ENCODE measurements at regions of chr13 and their contacts with region 1.

Region 1: DNA sequence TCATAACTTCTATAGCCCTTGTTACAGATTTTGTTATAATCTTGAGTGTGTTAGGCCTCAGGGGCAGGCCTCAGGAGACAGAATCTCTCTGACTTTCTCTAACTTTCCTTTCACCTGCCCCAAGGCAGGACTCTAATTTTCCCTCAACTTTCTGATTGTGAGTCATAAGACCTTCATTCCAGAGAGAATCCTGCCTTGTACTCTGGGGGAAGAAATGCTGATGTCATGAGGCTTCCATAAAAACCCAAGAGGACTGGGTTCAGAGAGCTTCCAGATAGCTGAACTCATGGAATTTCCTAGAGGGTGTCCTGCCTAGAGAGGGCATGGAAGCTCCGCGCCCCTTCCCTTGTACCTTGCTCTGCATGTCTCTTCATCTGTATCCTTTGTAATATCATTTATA is 5.3 kb upstream of the KBTBD6 start:
- DNase-seq: no peak
- ATAC-seq: no peak
- H3K4me3 ChIP-seq: no peak overlapping the region
- H3K27ac ChIP-seq: no peak overlapping the region
- H3K4me1 ChIP-seq: peaks cover 8% of the 10 kb centered on the region
- H3K27me3 ChIP-seq: no peaks in the 10 kb centered on the region
- CTCF ChIP-seq: no peak
- POLR2A ChIP-seq: no peak

Region 2: DNA sequence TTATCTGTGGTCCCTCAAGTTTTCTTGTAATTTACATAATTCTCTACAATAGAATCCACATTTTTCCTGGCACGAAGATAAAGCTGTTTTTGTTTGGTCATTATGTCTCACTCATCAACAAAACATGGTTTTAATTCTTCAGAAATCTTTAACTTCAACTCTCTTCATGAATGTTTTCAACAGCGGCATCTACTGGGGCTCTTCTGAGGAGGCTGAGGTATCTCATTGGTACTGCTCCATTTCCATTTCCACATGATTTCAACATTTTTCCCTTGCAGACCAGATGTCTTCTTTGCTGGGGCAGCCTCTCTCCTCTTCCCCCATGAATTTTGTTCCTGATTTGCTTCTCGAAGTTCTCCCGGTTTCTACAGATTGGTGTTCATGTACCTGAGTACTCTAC is 62.2 kb after region 1 on chr13:
- intact Hi-C with region 1: loop called (anchors 5 kb)
- DNase-seq: no peak
- ATAC-seq: no peak
- H3K4me3 ChIP-seq: no peak overlapping the region
- H3K27ac ChIP-seq: no peak overlapping the region
- H3K4me1 ChIP-seq: no peaks in the 10 kb centered on the region
- H3K27me3 ChIP-seq: no peaks in the 10 kb centered on the region
- CTCF ChIP-seq: no peak
- POLR2A ChIP-seq: no peak